Transverse colon (tissue), 4 donors: ENCODE measurements at regions of chr15 and their contacts with region 1.

Region 1: GRCh38 chr15:101269479-101270223 is 7.6 kb downstream of the SELENOS start:
- DNase-seq: no peak
- H3K4me3 ChIP-seq: no peak overlapping the region
- H3K27ac ChIP-seq: no peak overlapping the region
- H3K4me1 ChIP-seq: peaks cover 0 to 6% (median 0%) of the 10 kb centered on the region in 4 donors
- H3K27me3 ChIP-seq: no peaks in the 10 kb centered on the region
- CTCF ChIP-seq: peak in 1 of 5 experiments; percentile 19
- EP300 ChIP-seq: no peak
- POLR2A ChIP-seq: no peak

Region 2: GRCh38 chr15:101014921-101015841 is 254.5 kb before region 1 on chr15:
- in situ Hi-C with region 1: loop called in 1 of 4 experiments (anchors 5 kb)
- intact Hi-C with region 1: no loop called
- DNase-seq: peak; percentile 75
- H3K4me3 ChIP-seq: no peak overlapping the region
- H3K27ac ChIP-seq: no peak overlapping the region
- H3K4me1 ChIP-seq: no peaks in the 10 kb centered on the region
- H3K27me3 ChIP-seq: no peaks in the 10 kb centered on the region
- CTCF ChIP-seq: peak; percentile 66 to 89 (median 83)
- EP300 ChIP-seq: no peak
- POLR2A ChIP-seq: no peak

Region 3: DNA sequence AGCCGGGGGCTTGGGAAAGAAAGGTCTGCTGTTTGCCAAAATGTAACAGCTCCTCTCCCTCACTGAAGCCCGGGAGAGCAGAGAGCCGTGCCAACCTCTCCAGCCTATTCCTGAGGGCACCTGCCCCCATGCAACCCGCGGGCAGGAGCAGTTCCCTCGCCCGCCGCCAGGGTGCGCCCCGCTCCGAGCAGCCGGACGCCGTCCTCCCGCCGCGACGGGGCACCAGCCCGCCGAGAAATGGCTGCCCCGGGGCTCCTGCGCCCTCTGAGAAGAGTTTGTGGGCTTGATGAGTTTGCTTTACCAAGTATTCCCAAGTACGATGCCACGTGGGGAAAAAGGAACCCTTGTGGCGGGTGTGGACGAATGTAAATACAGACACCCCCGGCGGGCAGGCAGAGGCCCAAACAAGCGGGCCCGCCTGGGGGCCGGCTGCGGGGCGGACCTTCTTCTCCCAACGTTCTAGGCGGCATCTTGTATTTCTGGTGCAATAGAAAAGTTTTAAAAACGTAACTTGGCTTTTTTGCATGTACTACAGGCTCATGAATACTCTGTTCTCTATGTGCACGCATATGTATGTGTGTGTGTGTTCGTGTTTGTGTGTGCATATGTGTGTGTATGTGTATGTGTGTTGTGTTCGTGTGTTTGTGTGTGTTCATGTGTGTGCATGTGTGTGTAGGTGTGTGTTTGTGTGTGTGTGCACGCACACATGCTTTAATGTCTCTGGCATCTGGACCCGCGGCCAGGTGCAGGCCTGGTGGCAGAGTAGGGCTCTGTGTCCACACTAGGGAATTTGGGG is 180.7 kb before region 1 on chr15:
- in situ Hi-C with region 1: loop called in 2 of 4 experiments (anchors 5 to 10 kb)
- intact Hi-C with region 1: no loop called
- DNase-seq: peak; percentile 80
- H3K4me3 ChIP-seq: peak overlapping the region in 2 of 4 donors; percentile 25 to 39
- H3K27ac ChIP-seq: no peak overlapping the region
- H3K4me1 ChIP-seq: peaks cover 0 to 12% (median 2%) of the 10 kb centered on the region in 4 donors
- H3K27me3 ChIP-seq: no peaks in the 10 kb centered on the region
- CTCF ChIP-seq: peak; percentile 94 to 100 (median 100)
- EP300 ChIP-seq: no peak
- POLR2A ChIP-seq: no peak

Region 4: GRCh38 chr15:101105059-101105891 is 164.4 kb before region 1 on chr15:
- in situ Hi-C with region 1: loop called in 1 of 4 experiments (anchors 10 kb)
- intact Hi-C with region 1: no loop called
- DNase-seq: no peak
- H3K4me3 ChIP-seq: no peak overlapping the region
- H3K27ac ChIP-seq: no peak overlapping the region
- H3K4me1 ChIP-seq: no peaks in the 10 kb centered on the region
- H3K27me3 ChIP-seq: no peaks in the 10 kb centered on the region
- CTCF ChIP-seq: no peak
- EP300 ChIP-seq: no peak
- POLR2A ChIP-seq: no peak